ENCODE measurements at regions of chr13 and their contacts with region 1.

Region 1: GRCh38 chr13:46553886-46554858 is 1.2 kb downstream of the LRCH1 start:
- DNase-seq: peak; percentile 92
- H3K4me3 ChIP-seq: peak overlapping the region; percentile 94
- H3K27ac ChIP-seq: peak overlapping the region; percentile 94
- H3K4me1 ChIP-seq: peaks cover 24% of the 10 kb centered on the region
- H3K27me3 ChIP-seq: no peaks in the 10 kb centered on the region
- CTCF ChIP-seq: no peak; the same call in 1 of the 2 replicates

Region 2: GRCh38 chr13:46100191-46100815 is 453.9 kb before region 1 on chr13:
- CTCF ChIA-PET with region 1: no interaction called
- POLR2A ChIA-PET with region 1: no interaction called
- intact Hi-C with region 1: no loop called
- DNase-seq: no peak
- H3K4me3 ChIP-seq: no peak overlapping the region
- H3K27ac ChIP-seq: peak overlapping the region; percentile 76
- H3K4me1 ChIP-seq: peaks cover 37% of the 10 kb centered on the region
- H3K27me3 ChIP-seq: no peaks in the 10 kb centered on the region
- CTCF ChIP-seq: no peak

Region 3: DNA sequence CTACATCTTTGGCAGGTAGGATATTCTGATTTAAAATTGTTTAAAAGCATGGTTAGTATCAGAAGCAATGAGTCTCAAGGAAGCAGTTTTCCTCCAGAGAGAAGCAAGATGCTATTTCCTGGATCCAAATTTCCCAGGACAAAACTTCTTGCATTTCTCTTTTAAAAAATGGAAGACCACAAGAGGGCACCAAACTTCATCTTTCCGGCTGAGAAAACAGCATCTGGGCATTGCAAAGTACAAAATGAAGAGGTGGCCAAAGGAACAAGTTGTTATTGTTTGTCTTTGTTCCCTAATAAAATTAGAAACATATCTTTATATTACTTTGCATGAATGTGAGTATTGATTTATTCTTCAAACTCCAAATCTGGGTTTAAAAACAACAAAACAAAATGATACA is 61.2 kb before region 1 on chr13:
- CTCF ChIA-PET with region 1: no interaction called
- POLR2A ChIA-PET with region 1: no interaction called
- intact Hi-C with region 1: loop called (anchors 1 kb)
- DNase-seq: peak; percentile 74
- H3K4me3 ChIP-seq: no peak overlapping the region
- H3K27ac ChIP-seq: no peak overlapping the region
- H3K4me1 ChIP-seq: peaks cover 17% of the 10 kb centered on the region
- H3K27me3 ChIP-seq: no peaks in the 10 kb centered on the region
- CTCF ChIP-seq: peak; percentile 76

Region 4: DNA sequence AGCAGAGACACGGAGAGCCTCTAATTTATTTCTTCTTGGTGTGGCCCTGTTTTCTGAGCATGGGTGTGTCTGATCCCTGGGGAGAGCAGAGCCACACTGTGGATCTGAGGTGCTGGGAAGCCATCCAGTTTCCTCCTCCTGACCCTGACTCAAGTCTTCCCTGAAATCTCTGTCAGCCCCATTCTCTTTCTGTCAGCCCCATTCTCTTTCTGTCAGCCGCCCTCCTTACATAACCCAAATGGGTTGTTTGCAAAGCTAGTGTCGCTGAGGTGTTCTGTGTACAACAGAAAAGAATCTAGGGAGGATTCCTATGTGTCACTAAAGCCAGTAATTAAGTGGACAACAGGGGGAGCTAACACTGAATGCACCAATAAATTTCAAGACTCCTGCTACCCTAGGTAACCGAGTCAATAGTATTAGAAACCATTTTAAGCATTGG is 49.0 kb after region 1 on chr13:
- CTCF ChIA-PET with region 1: no interaction called
- POLR2A ChIA-PET with region 1: no interaction called
- intact Hi-C with region 1: loop called (anchors 1 kb)
- DNase-seq: no peak
- H3K4me3 ChIP-seq: no peak overlapping the region
- H3K27ac ChIP-seq: no peak overlapping the region
- H3K4me1 ChIP-seq: peaks cover 61% of the 10 kb centered on the region
- H3K27me3 ChIP-seq: no peaks in the 10 kb centered on the region
- CTCF ChIP-seq: peak; percentile 54

Region 5: GRCh38 chr13:46622630-46623256 is 68.6 kb after region 1 on chr13:
- CTCF ChIA-PET with region 1: no interaction called
- POLR2A ChIA-PET with region 1: no interaction called
- intact Hi-C with region 1: loop called (anchors 5 kb)
- DNase-seq: peak; percentile 96
- H3K4me3 ChIP-seq: peak overlapping the region; percentile 23
- H3K27ac ChIP-seq: peak overlapping the region; percentile 73
- H3K4me1 ChIP-seq: peaks cover 61% of the 10 kb centered on the region
- H3K27me3 ChIP-seq: no peaks in the 10 kb centered on the region
- CTCF ChIP-seq: no peak

Region 6: DNA sequence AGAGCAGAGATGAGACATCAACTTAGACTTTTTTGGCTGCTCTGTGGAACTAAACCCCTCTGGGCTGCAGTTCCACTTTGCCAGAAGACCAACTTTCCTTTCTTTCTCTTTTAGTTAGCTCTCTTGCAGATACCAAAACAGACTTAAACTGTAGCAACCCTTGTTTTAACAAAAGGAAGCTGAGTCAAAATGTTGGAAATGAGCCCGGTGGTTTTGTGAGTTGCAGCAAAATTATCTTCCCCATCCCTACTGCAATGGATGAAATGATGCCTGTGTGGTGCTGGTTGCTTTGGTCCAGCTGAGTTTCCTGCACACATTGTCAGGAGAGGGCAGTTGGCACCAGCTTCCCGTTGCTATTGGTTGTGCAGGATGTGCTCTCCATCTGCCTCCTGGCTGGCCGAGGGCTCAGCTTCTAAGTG is 114.1 kb after region 1 on chr13:
- CTCF ChIA-PET with region 1: no interaction called
- POLR2A ChIA-PET with region 1: no interaction called
- intact Hi-C with region 1: loop called (anchors 1 kb)
- DNase-seq: peak; percentile 83
- H3K4me3 ChIP-seq: peak overlapping the region; percentile 24
- H3K27ac ChIP-seq: peak overlapping the region; percentile 76
- H3K4me1 ChIP-seq: peaks cover 73% of the 10 kb centered on the region
- H3K27me3 ChIP-seq: no peaks in the 10 kb centered on the region
- CTCF ChIP-seq: no peak

Region 7: GRCh38 chr13:46721054-46721453 is 166.9 kb after region 1 on chr13:
- CTCF ChIA-PET with region 1: interaction called, 27 read pairs
- POLR2A ChIA-PET with region 1: no interaction called
- intact Hi-C with region 1: loop called (anchors 1 kb)
- DNase-seq: peak; percentile 71
- H3K4me3 ChIP-seq: no peak overlapping the region
- H3K27ac ChIP-seq: no peak overlapping the region
- H3K4me1 ChIP-seq: peaks cover 21% of the 10 kb centered on the region
- H3K27me3 ChIP-seq: no peaks in the 10 kb centered on the region
- CTCF ChIP-seq: peak; percentile 78

Measured in A673 (cell line).